ENCODE measurements at regions of chr16 and their contacts with region 1.

Region 1: DNA sequence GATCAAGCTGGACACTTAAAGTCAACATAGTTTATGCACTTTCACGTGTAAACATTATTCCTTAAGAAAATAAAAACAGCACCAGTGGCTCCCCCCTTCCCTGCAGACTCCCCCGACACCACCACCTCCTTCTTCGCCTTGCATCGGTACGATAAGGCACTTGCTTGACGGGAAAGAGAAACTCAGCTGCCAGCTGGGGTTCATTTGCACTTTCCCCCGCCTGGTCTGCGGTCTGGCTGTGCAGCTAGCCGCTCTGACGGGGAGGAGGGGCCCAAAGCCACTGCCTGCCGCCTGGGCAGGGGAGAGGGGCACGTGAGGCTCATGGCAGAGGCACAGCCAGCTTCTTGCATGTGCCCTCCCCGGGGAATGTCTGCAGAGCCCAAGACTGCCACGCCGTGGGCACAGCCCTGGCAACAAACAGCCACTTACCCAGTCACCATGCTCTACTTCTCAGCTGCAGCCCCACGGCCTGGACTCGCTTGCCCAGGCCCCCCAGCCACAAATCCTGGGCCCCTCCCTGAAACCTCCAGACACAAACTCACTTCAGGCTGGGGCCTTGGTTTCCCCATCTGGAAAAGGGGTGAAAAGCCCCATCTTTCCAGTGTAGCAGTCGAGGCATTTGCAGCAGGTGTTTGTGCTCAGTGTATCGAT is 16.5 kb upstream of the PRM1 start:
- DNase-seq: peak; percentile 96
- H3K4me3 ChIP-seq: peak overlapping the region; percentile 49
- H3K27ac ChIP-seq: peak overlapping the region; percentile 96
- H3K4me1 ChIP-seq: peaks cover 96% of the 10 kb centered on the region
- CTCF ChIP-seq: peak; percentile 41; the same call in 1 of the 2 replicates

Region 2: DNA sequence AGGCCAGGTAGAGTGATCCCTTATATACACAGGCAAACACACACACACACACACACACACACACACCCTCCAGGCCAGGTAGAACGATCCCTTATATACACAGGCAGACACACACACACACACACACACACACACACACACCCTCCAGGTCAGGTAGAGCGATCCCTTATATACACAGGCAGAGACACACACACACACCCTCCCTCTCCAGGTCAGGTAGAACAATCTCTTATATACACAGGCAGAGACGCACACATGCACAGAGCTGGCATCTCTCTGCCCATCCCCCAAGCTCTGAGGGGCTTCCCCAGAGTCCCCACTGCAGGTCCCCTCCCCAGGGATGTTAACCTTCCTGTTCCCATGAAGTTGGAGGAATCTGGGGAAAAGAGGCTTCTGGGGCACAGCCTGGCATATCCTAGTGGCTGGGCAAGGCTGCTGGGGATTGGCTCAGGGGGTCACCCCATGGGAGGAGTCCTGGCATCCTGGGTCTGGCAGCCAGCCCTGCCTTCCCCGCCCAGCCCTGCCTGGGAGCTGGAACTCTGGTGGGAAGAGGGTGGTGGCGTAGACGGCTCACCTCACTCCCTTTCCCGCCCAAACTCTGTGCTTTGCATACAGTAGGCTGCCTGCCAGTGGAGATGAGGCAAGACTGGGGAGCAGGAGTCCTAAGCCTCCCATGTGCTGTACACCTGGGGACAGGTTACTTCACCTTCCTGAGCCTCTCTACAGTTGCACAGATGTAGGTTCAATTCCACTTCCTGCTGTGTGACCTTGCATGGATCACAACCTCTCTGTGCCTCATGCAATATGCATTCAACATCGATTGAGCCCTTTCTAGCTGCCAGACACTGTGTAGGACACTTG is 644.7 kb before region 1 on chr16:
- CTCF ChIA-PET with region 1: no interaction called
- POLR2A ChIA-PET with region 1: no interaction called
- intact Hi-C with region 1: no loop called
- DNase-seq: no peak
- H3K4me3 ChIP-seq: no peak overlapping the region
- H3K27ac ChIP-seq: no peak overlapping the region
- H3K4me1 ChIP-seq: no peaks in the 10 kb centered on the region
- CTCF ChIP-seq: no peak

Region 3: DNA sequence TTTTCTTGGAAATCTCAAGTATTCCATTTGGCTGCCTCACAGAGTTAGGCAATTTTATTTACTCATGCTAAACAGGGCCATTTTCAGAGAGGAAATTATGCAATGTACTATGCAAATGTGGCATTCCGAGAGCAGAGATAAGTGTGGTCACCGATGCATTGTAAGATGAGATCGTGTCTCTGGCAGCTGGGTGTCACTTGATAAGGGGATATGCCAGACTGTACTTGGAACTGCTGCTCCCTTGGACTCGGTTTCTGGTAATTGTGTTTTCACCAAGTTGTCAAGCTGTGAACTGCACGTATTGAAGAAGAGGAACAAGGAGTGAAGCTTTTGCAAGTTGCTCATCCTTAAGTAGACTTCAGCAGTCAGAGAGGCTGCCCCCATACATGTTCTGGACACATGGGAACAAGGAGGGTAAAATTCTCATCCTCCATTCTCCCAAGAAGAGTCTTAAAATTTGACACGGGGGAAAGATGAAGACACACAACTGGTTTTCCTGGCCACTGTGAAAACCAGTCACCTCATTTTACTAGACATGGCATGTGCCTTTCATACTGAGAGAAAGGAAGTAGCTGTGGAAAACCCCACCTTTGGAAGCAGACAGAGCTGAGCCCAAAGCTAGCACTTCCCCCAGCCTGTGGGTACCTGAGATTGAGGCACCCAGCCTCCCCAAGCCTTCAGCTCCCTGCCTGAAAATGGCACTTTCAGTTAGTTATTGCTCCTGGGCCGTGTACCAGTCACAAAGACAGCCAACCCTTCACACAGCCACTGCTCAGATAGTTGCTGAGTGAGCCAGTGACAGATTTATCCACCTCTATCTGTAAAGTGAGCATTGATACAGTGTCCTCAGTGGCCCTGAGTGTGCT is 192.3 kb before region 1 on chr16:
- CTCF ChIA-PET with region 1: no interaction called
- POLR2A ChIA-PET with region 1: no interaction called
- intact Hi-C with region 1: no loop called
- DNase-seq: peak; percentile 68
- H3K4me3 ChIP-seq: no peak overlapping the region
- H3K27ac ChIP-seq: no peak overlapping the region
- H3K4me1 ChIP-seq: peaks cover 22% of the 10 kb centered on the region
- CTCF ChIP-seq: no peak

Region 4: GRCh38 chr16:11224096-11224893 is 73.3 kb before region 1 on chr16:
- CTCF ChIA-PET with region 1: no interaction called
- POLR2A ChIA-PET with region 1: no interaction called
- intact Hi-C with region 1: loop called (anchors 2 kb)
- DNase-seq: peak; percentile 63
- H3K4me3 ChIP-seq: peak overlapping the region; percentile 45
- H3K27ac ChIP-seq: peak overlapping the region; percentile 46
- H3K4me1 ChIP-seq: peaks cover 27% of the 10 kb centered on the region
- CTCF ChIP-seq: no peak

Region 5: GRCh38 chr16:11312718-11313492 is 15.3 kb after region 1 on chr16:
- CTCF ChIA-PET with region 1: interaction called, 20 read pairs
- POLR2A ChIA-PET with region 1: interaction called, 79 read pairs
- intact Hi-C with region 1: loop called (anchors 1 kb)
- DNase-seq: no peak
- H3K4me3 ChIP-seq: no peak overlapping the region
- H3K27ac ChIP-seq: peak overlapping the region; percentile 99
- H3K4me1 ChIP-seq: peaks cover 79% of the 10 kb centered on the region
- CTCF ChIP-seq: no peak

Region 6: DNA sequence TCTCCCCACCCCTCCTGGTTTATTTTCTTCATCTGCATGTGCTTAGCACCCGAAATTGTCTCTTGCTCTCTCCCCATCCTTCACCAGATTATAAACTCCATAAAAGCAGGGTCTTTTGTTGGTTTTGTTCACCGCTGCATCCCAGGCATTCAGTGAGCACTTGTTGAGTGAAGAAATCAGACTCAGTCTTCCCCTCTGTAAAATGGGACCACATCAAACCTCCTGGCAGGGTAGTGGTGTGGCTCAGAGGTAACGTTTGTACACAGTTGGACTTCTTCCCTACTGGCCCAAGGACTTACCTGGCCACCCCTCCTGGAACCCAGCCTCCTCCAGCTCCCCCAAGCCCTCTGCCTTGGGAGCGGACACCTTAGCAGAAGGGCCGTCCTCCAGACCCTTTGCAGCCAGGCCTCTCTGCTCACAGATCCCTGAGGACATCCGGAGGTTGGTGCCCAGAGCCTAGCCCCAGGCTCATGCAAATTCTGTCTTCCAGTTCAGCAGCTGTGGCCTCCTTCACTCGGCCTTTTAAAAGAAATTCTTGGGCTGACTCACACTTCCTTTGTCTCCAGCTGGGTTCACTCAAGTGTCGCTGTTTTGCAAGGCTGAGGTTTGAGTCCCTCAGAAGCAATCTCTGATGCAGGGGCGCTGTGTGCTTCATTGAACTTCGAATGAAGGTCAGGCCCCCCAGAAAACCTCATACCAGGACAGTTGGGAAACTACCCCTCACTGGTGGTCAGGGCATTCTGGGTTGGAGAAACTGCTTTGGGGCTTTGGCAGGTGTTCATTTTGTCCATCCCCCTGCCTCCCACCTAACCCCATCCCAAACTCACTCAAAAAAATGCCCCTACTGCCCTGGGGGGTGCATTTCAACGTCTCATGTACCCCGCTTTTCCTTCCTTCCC is 30.8 kb after region 1 on chr16:
- CTCF ChIA-PET with region 1: interaction called, 3 read pairs
- POLR2A ChIA-PET with region 1: interaction called, 11 read pairs
- intact Hi-C with region 1: loop called (anchors 1 kb)
- DNase-seq: peak; percentile 98
- H3K4me3 ChIP-seq: peak overlapping the region; percentile 62
- H3K27ac ChIP-seq: peak overlapping the region; percentile 93
- H3K4me1 ChIP-seq: peaks cover 76% of the 10 kb centered on the region
- CTCF ChIP-seq: peak; percentile 51

Region 7: DNA sequence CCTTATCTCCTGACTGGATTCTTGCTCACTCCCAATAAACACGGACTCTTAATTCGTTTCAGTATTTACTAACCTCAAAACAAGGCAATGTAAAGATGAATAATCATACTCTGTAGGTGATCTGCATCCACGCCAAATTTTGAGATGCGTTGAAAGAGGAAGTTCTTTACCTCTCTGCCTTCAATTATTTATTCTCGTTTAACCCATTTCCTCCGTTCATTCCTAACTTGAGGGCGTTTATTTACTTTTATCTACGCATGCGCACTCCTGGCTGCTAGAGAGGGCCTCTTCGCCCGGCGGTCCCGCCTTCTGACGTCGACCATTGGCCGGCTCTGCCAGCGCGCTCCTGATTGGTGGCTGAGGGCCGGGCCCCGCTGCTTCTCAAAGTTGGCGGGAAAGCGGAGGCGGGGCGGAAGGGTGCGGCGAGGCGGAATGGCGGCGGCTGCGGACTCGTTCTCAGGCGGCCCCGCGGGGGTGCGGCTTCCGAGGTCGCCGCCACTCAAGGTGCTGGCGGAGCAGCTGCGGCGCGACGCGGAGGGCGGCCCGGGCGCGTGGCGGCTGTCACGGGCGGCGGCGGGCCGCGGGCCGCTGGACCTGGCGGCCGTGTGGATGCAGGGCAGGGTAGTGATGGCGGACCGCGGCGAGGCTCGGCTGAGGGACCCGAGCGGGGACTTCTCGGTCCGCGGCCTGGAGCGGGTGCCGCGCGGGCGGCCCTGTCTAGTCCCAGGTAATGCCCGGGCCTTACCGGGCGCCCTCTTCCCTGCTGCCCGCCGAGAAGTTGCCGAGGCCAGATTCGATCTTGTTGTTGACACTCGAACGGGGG is 47.6 kb after region 1 on chr16 and contains the start of gene RMI2:
- CTCF ChIA-PET with region 1: no interaction called
- POLR2A ChIA-PET with region 1: interaction called, 12 read pairs
- intact Hi-C with region 1: no loop called
- DNase-seq: peak; percentile 99
- H3K4me3 ChIP-seq: peak within 1 kb of the TSS; percentile 96
- H3K27ac ChIP-seq: peak within 1 kb of the TSS; percentile 57
- H3K4me1 ChIP-seq: peaks cover 63% of the 10 kb centered on the region
- CTCF ChIP-seq: no peak
- total RNA-seq, gene RMI2: 60.4 and 84.5 TPM in 2 replicates

Region 8: DNA sequence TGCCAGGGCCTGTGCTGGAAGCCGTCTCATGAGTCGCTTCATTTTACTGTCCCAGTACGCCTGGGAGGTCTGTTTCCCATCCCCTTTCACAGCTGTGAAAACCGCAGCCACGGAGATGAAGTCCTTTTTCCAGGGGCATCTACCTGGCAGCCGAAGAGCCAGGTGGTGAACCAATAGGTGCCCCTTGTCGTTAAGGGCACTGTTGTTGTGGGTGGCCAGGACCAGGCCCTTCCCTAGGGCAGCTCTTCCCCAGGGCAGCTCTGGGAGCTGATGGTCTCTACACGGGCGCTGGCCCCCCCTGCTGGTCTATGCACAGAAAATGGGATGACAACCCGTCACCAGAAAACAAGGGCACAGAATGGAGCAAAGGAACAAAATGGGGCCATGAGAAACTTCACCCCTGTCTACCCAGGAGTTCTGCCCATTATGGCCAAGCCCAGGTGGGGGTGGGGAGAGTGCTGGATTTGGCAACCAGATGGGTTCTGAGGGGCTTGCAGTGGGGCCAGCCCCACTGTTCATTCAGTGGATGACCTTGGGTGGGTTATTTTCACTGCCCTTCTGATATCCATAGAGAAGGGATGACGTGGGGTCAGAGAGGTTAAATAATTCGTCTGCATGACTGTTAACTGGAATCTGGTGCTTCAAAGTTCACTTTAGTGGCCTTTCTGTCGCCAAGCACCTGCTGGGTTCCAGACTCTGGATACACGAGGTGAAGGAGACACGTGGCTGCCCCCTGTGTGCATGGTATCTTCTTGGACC is 59.1 kb after region 1 on chr16:
- CTCF ChIA-PET with region 1: interaction called, 3 read pairs
- POLR2A ChIA-PET with region 1: interaction called, 11 read pairs
- intact Hi-C with region 1: loop called (anchors 1 kb)
- DNase-seq: peak; percentile 78
- H3K4me3 ChIP-seq: peak overlapping the region; percentile 39
- H3K27ac ChIP-seq: peak overlapping the region; percentile 91
- H3K4me1 ChIP-seq: peaks cover 85% of the 10 kb centered on the region
- CTCF ChIP-seq: peak; percentile 98

Region 9: DNA sequence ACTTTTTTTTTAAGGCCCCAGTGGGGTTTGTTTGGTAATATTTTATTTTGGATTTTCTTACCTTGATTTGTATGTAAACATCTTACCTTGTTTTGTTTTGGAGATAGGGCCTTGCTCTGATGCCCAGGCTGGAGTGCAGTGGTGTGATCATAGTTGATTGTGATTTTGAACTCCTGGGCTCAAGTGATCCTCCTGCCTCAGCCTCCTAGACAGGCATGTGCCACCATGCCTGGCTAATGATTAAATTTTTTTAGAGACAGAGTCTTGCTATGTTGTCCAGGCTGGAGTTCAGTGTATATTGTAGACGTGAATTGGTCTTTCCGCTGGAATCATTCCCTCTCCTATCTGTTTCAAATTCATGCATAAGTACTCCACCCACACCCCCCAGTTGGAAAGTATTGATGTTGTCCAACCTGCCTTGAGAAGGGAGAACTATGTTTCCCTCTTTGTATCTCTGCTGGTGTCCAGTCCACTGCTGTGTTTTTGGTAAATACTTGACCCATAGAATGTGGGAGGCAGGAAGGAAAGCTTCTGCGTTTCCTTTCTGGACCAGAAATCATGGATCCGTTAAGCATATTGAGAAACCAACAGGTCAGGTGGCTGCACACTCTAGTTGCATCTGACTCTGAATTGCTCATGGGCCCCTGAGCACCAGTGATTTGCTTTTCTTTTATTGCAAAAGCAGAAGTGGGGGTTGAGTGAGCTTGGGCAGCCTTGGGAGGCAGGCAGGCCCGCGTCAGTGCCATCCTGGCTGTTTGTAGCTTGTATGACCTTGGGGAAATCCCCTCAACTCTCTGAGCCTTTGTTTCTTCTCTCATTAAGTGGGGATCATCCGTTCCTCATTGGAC is 72.7 kb after region 1 on chr16:
- CTCF ChIA-PET with region 1: interaction called, 3 read pairs
- POLR2A ChIA-PET with region 1: interaction called, 10 read pairs
- intact Hi-C with region 1: no loop called
- DNase-seq: peak; percentile 92
- H3K4me3 ChIP-seq: peak overlapping the region; percentile 21
- H3K27ac ChIP-seq: peak overlapping the region; percentile 85
- H3K4me1 ChIP-seq: peaks cover 53% of the 10 kb centered on the region
- CTCF ChIP-seq: no peak

Region 10: GRCh38 chr16:11506741-11507305 is 209.2 kb after region 1 on chr16:
- CTCF ChIA-PET with region 1: no interaction called
- POLR2A ChIA-PET with region 1: no interaction called
- intact Hi-C with region 1: no loop called
- DNase-seq: peak; percentile 28
- H3K4me3 ChIP-seq: no peak overlapping the region
- H3K27ac ChIP-seq: no peak overlapping the region
- H3K4me1 ChIP-seq: peaks cover 7% of the 10 kb centered on the region
- CTCF ChIP-seq: peak; percentile 43; the same call in 1 of the 2 replicates

Region 11: DNA sequence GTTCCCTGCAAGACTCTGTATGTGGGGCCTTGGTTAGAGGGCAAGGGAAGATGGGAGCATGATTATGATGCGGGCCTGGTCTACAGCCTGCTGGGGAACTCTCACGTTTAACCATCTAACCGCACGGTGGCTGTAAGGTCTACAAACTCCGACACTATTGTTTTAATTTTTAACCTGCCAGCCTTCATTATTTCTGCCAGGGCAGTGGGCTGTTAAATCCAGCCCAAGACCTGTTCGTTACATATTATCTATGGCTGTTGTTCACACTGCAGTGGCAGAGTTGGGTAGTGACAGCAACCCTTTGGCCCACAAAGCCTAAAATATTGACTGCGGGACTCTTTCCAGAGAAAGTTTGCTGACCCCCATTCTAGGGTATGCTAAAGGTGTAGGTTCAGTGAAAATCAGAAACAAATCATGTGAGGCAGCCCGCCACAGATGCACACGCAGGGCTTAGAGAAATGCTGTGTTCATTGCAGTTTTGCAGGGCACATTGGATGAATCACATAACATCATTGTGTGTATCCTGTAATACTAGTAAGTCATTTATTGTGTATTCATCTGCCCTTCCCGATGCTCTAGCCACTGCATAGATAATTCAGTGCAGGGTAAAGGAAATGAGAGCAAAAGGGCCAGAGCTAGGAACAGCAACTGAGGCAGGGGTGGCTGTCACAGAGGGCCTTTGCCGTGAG is 693.2 kb after region 1 on chr16:
- CTCF ChIA-PET with region 1: no interaction called
- POLR2A ChIA-PET with region 1: no interaction called
- intact Hi-C with region 1: no loop called
- DNase-seq: no peak
- H3K4me3 ChIP-seq: no peak overlapping the region
- H3K27ac ChIP-seq: no peak overlapping the region
- H3K4me1 ChIP-seq: no peaks in the 10 kb centered on the region
- CTCF ChIP-seq: no peak

Measured in OCI-LY7 (cell line).